Activated naive CD4-positive, alpha-beta T cell treated with anti-CD3 and anti-CD28 coated beads, Interleukin-2, amount 10 ng/mL, durations not matched to agents 7 days and 5 days (primary cell): ENCODE measurements at regions of chr6 and their contacts with region 1.

Region 1: GRCh38 chr6:108914235-108915022 is 66.2 kb downstream of the ARMC2 start:
- DNase-seq: peak; percentile 55
- H3K4me3 Mint-ChIP-seq: no peak overlapping the region
- H3K27ac Mint-ChIP-seq: no peak overlapping the region
- H3K4me1 Mint-ChIP-seq: peaks cover 4% of the 10 kb centered on the region
- H3K27me3 Mint-ChIP-seq: peaks cover 38% of the 10 kb centered on the region

Region 2: DNA sequence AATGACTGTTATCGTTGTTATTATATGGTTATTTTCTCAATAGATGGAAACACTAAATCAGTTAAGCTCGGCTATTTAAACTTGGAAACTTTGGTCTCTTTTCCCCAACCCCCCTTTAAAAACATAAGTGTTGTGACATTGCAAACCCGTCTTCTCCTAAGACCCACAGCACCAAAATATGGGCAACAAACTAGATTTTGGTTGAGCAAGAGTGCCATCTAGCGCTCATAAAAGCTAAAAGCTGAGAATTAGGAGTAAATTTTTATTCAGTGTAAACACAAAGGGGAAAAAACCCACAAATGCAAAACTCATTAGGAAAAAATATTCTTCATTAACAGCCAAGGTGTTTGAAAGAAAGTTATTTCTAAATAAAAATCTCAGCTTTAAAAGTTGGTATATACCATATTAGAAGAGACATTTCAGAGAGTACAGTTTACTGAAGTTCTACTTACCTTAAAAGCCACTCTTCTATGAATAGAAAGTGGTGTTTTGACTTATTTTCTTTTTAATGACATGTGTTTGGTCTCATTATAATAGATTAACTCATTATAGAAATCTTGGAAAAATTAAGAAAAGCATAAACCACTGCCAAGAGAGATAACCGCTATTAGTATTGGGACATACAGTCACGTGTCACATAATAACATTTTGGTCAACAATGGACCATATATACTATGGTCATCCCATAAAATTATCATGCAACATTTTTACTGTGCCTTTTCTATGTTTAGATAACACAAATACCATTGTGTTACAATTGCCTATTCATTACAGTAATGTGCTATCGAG is 159.1 kb after region 1 on chr6:
- CTCF ChIA-PET with region 1: interaction called, 60 read pairs
- DNase-seq: peak; percentile 59
- H3K4me3 Mint-ChIP-seq: no peak overlapping the region
- H3K27ac Mint-ChIP-seq: no peak overlapping the region
- H3K4me1 Mint-ChIP-seq: peaks cover 24% of the 10 kb centered on the region
- H3K27me3 Mint-ChIP-seq: peaks cover 4% of the 10 kb centered on the region